ENCODE measurements at regions of chr13 and their contacts with region 1.

Region 1: GRCh38 chr13:102773441-102774215 is at the start of gene TEX30:
- DNase-seq: peak; percentile 89 to 95
- ATAC-seq: peak; percentile 99
- H3K4me3 ChIP-seq: peak within 1 kb of the TSS; percentile 66 to 73
- H3K27ac ChIP-seq: peak within 1 kb of the TSS in 1 of 2 donors; percentile 70
- H3K4me1 ChIP-seq: no peaks in the 10 kb centered on the region
- H3K27me3 ChIP-seq: no peaks in the 10 kb centered on the region
- total RNA-seq, gene TEX30: 5.0 to 7.5 TPM

Region 2: DNA sequence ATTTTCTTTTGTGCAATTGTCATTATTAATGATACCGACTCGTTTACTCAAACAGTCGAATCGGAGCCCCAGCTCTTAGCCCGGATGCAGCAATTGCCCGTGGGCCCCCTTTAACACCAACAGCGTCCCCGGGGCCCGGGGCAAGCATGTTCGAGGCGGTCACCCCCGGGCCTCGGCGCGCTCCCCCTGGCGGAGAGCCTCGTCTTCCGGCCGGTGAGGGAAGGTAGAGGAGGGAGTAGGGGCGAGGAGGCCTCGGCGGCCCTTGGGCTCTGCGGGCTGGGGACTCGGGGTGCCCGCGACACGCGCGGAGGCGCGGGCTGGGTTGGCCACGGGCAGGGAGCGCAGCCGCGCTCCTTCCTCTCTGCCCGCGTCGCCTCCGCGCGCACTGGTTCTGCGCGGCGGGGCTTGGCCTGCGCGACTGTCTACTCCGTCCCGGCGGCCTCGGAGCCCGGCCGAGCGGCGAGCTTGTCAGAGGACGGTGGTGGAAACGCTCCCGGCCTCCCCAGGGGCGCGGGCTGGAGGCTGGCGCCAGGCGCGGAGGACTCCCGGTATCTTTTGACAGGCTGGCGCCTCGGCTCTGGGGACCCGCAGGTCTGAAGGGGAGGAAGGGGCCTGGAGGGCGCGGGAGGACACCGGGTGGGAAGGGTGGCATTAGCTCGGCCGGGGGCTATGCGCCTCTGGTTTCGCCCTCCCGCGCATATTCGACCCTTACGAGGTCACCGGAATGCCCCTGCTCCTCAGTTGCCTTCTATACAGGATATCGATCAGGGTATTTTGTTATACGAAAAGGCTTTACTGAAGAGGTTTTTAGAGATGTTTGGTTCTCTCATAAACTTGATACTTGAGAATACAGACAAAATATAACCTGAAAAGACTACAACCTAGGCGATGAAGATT is 26.8 kb after region 1 on chr13:
- intact Hi-C with region 1: loop called (anchors 2 kb)
- DNase-seq: peak; percentile 87 to 94
- ATAC-seq: peak; percentile 90
- H3K4me3 ChIP-seq: peak overlapping the region; percentile 65 to 66
- H3K27ac ChIP-seq: peak overlapping the region; percentile 14 to 59
- H3K4me1 ChIP-seq: no peaks in the 10 kb centered on the region
- H3K27me3 ChIP-seq: no peaks in the 10 kb centered on the region

Measured in aorta (tissue), 5 donors.